GM12878 (cell line): ENCODE measurements at regions of chr3 and their contacts with region 1.

Region 1: DNA sequence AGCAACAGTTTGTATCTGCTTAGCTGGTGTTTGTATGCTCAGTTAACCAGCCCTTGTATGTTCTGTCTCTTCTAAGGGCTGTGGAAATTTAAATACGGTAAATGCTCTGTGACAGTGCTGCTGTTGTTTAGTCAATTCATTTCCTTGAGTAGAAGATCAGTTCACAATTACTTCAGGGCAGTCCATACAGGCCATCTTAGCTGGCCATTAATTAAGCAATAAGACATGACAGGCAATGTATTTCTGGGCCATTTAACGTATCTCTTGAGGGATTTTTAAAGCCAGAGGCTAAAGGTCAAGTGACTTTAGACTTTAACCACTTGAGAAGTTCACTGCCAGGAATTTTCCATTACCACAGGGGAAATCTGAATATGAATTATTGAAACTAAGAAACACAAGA is 351.8 kb downstream of the ZIC1 start:
- DNase-seq: no peak
- ATAC-seq: no peak
- H3K4me3 ChIP-seq: no peak overlapping the region
- H3K27ac ChIP-seq: no peak overlapping the region
- H3K4me1 ChIP-seq: no peaks in the 10 kb centered on the region
- H3K27me3 ChIP-seq: no peaks in the 10 kb centered on the region
- CTCF ChIP-seq: no peak
- EP300 ChIP-seq: no peak
- POLR2A ChIP-seq: no peak
- RAD21 ChIP-seq: no peak

Region 2: GRCh38 chr3:147773116-147773630 is 12.2 kb after region 1 on chr3:
- CTCF ChIA-PET with region 1: no interaction called
- POLR2A ChIA-PET with region 1: no interaction called
- RAD21 ChIA-PET with region 1: no interaction called
- SMC1A ChIA-PET with region 1: interaction called, 10 read pairs
- in situ Hi-C with region 1: no loop called
- intact Hi-C with region 1: no loop called
- DNase-seq: no peak
- ATAC-seq: no peak
- H3K4me3 ChIP-seq: no peak overlapping the region
- H3K27ac ChIP-seq: no peak overlapping the region
- H3K4me1 ChIP-seq: no peaks in the 10 kb centered on the region
- H3K27me3 ChIP-seq: no peaks in the 10 kb centered on the region
- CTCF ChIP-seq: no peak
- EP300 ChIP-seq: no peak
- POLR2A ChIP-seq: no peak
- RAD21 ChIP-seq: no peak